Activated T-helper 1 cell treated with anti-CD3 and anti-CD28 coated beads, Interleukin-12 subunit alpha, Interleukin-12 subunit beta, Interleukin-2, Interleukin-4 antibody, amounts not matched to agents 30 ng/mL and 10 ng/mL and 1 ng/mL, durations not matched to agents 14 hours and 24 hours and 36 hours (primary cell): ENCODE measurements at regions of chr2 and their contacts with region 1.

Region 1: DNA sequence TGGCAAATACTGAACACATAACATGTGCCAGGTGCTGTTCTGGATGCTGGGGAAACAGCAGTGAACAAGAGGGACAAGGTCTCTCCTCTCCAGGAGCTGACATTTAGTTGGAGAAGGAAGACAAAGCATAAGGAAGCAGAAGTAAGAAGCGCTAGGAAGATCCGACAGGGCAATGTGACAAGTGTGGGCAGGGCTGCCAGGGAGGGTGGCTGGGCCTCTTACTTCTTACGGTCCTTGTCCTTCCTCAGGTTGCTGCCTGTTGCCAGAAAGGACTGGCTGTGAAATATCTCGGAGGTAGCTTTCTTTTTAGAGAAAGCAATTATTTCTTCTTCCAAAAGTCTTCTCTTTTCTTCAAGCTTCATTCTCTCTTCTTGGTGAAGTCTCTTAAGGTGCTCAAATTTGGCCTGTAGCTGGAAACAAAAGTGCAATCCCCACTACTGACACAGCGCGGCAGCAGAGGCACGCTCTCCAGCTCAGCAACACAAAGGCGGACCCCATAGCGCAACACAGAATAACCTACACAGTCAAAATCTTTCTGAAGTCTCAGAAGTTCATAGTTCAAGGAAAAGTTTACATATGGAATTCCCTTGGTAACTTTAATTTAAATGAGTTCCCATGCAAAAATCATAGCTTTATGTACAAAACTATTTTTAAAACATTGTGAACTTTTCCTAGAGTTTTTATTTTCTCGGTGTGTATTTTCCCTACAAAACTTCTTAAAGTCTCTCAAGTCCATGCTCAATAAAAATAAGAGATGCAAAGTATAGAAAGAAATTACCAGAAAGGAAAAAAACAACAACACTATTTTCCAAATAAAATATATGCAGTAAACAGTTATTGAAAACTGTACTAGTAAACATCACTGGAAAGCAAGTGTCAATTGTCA is 67.7 kb downstream of the SEPTIN10 start:
- DNase-seq: peak; percentile 16
- H3K4me3 Mint-ChIP-seq: no peak overlapping the region
- H3K27ac Mint-ChIP-seq: no peak overlapping the region
- H3K4me1 Mint-ChIP-seq: no peaks in the 10 kb centered on the region
- H3K27me3 Mint-ChIP-seq: peaks cover 5% of the 10 kb centered on the region

Region 2: DNA sequence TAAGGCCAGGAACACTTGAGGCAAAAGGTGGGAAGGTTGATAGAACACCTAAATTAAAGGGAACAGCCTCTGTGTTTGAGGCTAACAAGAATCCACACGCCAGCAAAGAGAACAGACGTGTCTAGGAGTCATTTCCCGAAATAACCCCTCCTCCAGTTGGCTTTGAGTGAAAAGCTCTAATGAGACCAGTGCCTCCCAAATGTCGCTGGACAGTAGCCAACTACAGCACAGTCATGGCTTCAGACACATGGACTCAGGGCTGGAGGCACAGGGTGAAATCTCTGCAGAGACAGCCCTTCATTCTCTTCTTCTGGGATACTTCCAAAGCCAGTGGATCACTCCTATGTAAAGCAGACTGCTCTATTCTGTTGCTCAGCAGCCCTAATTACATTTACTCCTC is 117.7 kb after region 1 on chr2:
- intact Hi-C with region 1: loop called (anchors 5 kb)
- DNase-seq: no peak
- H3K4me3 Mint-ChIP-seq: no peak overlapping the region
- H3K27ac Mint-ChIP-seq: no peak overlapping the region
- H3K4me1 Mint-ChIP-seq: no peaks in the 10 kb centered on the region
- H3K27me3 Mint-ChIP-seq: peaks cover 11% of the 10 kb centered on the region

Region 3: GRCh38 chr2:109736177-109736827 is 190.2 kb after region 1 on chr2:
- intact Hi-C with region 1: loop called (anchors 1 kb)
- DNase-seq: no peak
- H3K4me3 Mint-ChIP-seq: no peak overlapping the region
- H3K27ac Mint-ChIP-seq: no peak overlapping the region
- H3K4me1 Mint-ChIP-seq: no peaks in the 10 kb centered on the region
- H3K27me3 Mint-ChIP-seq: peaks cover 7% of the 10 kb centered on the region